ENCODE measurements at regions of chr19 and their contacts with region 1.

Region 1: DNA sequence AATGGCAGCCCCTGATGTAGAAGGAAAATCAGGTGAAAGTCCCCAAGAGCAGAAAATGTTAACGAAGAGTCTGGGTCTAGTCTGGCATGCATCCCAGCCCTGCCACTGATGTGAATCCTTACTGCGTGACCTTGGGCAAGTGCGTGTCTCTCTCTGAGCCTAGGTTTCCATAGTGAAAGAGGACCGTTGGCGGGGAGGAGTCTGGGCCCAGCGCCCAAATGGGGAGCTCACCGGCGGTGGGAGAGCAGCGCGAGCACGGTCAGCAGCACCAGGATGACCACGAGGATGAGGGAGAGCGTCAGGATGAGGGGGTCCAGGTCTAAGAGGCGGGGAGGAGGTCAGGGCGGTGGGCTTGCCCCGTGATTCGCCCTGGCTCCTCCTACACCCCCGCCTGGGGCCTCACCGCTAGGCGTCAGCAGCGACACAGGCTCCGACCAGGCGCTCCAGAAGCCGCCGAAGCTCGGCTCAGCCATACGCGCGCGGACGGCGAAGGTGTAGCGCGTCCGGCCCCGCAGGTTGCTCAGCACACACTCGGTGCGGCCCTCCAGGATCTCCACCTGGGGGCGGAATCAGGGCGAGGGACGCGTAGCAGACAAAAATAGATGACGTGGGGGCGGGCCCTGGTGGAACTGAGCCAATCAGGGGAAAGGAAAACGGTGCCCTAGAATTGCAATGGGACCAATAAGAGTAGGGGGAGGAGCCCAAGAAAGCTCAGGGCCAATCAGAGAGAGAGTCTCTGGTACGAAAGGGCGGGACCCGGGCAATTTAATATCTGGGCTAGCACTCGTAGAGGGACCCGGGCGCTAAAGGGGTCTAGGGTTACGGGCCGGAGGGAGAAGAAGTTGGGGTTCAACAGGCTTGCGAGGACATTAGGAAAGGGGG is 3.2 kb downstream of the EPOR start:
- DNase-seq: peak; percentile 98
- H3K4me3 Mint-ChIP-seq: peak overlapping the region; percentile 85
- H3K27ac Mint-ChIP-seq: peak overlapping the region; percentile 92
- H3K4me1 Mint-ChIP-seq: peaks cover 52% of the 10 kb centered on the region
- H3K27me3 Mint-ChIP-seq: peaks cover 8% of the 10 kb centered on the region

Region 2: GRCh38 chr19:11293433-11294389 is 87.2 kb before region 1 on chr19:
- CTCF ChIA-PET with region 1: interaction called, 7 read pairs
- intact Hi-C with region 1: loop called (anchors 1 kb)
- DNase-seq: peak; percentile 90
- H3K4me3 Mint-ChIP-seq: peak overlapping the region; percentile 66
- H3K27ac Mint-ChIP-seq: no peak overlapping the region
- H3K4me1 Mint-ChIP-seq: peaks cover 9% of the 10 kb centered on the region
- H3K27me3 Mint-ChIP-seq: peaks cover 8% of the 10 kb centered on the region

Region 3: GRCh38 chr19:11346092-11346940 is 34.6 kb before region 1 on chr19 and contains the starts of genes CCDC159 and TMEM205:
- CTCF ChIA-PET with region 1: interaction called, 4 read pairs
- intact Hi-C with region 1: loop called (anchors 1 kb)
- DNase-seq: peak; percentile 100
- H3K4me3 Mint-ChIP-seq: peak within 1 kb of the TSS; percentile 97
- H3K27ac Mint-ChIP-seq: peak within 1 kb of the TSS; percentile 86
- H3K4me1 Mint-ChIP-seq: peaks cover 26% of the 10 kb centered on the region
- H3K27me3 Mint-ChIP-seq: no peaks in the 10 kb centered on the region
- total RNA-seq, gene CCDC159: 15.2 to 16.5 TPM
- total RNA-seq, gene TMEM205: 21.4 to 24.2 TPM

Region 4: GRCh38 chr19:11390933-11391680 is 10.2 kb after region 1 on chr19:
- CTCF ChIA-PET with region 1: interaction called, 12 read pairs
- intact Hi-C with region 1: no loop called
- DNase-seq: no peak
- H3K4me3 Mint-ChIP-seq: no peak overlapping the region
- H3K27ac Mint-ChIP-seq: no peak overlapping the region
- H3K4me1 Mint-ChIP-seq: peaks cover 3% of the 10 kb centered on the region
- H3K27me3 Mint-ChIP-seq: peaks cover 4% of the 10 kb centered on the region

Region 5: GRCh38 chr19:11422163-11423021 is 41.5 kb after region 1 on chr19:
- CTCF ChIA-PET with region 1: interaction called, 12 read pairs
- intact Hi-C with region 1: loop called (anchors 1 kb)
- DNase-seq: peak; percentile 87
- H3K4me3 Mint-ChIP-seq: peak overlapping the region; percentile 65
- H3K27ac Mint-ChIP-seq: no peak overlapping the region
- H3K4me1 Mint-ChIP-seq: peaks cover 41% of the 10 kb centered on the region
- H3K27me3 Mint-ChIP-seq: peaks cover 57% of the 10 kb centered on the region